B cell (primary cell): ENCODE measurements at regions of chr9 and their contacts with region 1.

Region 1: GRCh38 chr9:133532937-133533668 is 1.4 kb upstream of the ADAMTSL2 start:
- DNase-seq: peak; percentile 65
- ATAC-seq: peak; percentile 79
- H3K4me3 ChIP-seq: no peak overlapping the region
- H3K4me3 Mint-ChIP-seq: peak overlapping the region; percentile 29
- H3K27ac ChIP-seq: no peak overlapping the region
- H3K27ac Mint-ChIP-seq: peak overlapping the region; percentile 15
- H3K4me1 ChIP-seq: peaks cover 7 to 18% of the 10 kb centered on the region in 2 donors
- H3K4me1 Mint-ChIP-seq: peaks cover 13% of the 10 kb centered on the region
- H3K27me3 ChIP-seq: peaks cover 0 to 66% (median 10%) of the 10 kb centered on the region in 4 experiments
- H3K27me3 Mint-ChIP-seq: peaks cover 29% of the 10 kb centered on the region
- CTCF ChIP-seq: no peak

Region 2: GRCh38 chr9:133726401-133727276 is 193.5 kb after region 1 on chr9:
- CTCF ChIA-PET with region 1: no interaction called
- POLR2A ChIA-PET with region 1: no interaction called
- intact Hi-C with region 1: loop called (anchors 5 kb)
- DNase-seq: no peak
- ATAC-seq: no peak
- H3K4me3 ChIP-seq: no peak overlapping the region
- H3K4me3 Mint-ChIP-seq: no peak overlapping the region
- H3K27ac ChIP-seq: no peak overlapping the region
- H3K27ac Mint-ChIP-seq: peak overlapping the region; percentile 7
- H3K4me1 ChIP-seq: no peaks in the 10 kb centered on the region
- H3K4me1 Mint-ChIP-seq: peaks cover 7% of the 10 kb centered on the region
- H3K27me3 ChIP-seq: peaks cover 0 to 27% (median 8%) of the 10 kb centered on the region in 4 experiments
- H3K27me3 Mint-ChIP-seq: peaks cover 33% of the 10 kb centered on the region
- CTCF ChIP-seq: peak; percentile 39

Region 3: DNA sequence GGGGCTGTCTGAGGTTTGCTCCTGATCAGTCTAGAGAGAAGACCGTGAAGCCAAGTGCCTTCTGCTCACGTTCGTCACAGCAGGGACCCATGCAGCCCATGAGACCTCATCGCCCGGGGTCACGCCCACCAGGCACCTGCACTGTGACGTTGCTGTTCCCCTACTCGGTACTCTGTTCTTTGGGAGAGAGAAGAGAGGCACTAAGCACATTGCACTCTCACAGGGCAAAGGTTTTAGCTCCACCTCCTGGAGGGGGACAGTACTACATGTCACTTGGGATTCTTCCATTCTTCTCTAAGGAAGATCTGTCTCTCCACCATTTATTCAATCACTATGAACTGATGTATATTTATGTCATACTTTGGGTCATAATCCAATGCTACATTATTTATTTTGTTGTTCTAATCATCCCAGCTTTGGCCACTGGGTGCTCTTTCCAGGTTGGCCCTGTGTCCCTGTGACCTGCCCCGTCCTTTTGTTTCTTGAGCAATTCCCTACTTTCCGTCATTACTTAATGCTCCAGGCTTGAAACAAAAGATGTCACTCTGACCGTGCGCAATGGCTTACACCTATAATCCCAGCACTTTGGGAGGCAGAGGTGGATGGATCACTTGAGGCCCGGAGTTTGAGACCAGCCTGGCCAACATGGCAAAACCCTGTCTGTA is 566.2 kb after region 1 on chr9:
- CTCF ChIA-PET with region 1: no interaction called
- POLR2A ChIA-PET with region 1: no interaction called
- intact Hi-C with region 1: loop called (anchors 5 kb)
- DNase-seq: peak; percentile 80
- ATAC-seq: peak; percentile 92
- H3K4me3 ChIP-seq: no peak overlapping the region
- H3K4me3 Mint-ChIP-seq: no peak overlapping the region
- H3K27ac ChIP-seq: no peak overlapping the region
- H3K27ac Mint-ChIP-seq: no peak overlapping the region
- H3K4me1 ChIP-seq: no peaks in the 10 kb centered on the region
- H3K4me1 Mint-ChIP-seq: peaks cover 4% of the 10 kb centered on the region
- H3K27me3 ChIP-seq: peaks cover 0 to 3% (median 2%) of the 10 kb centered on the region in 4 experiments
- H3K27me3 Mint-ChIP-seq: peaks cover 21% of the 10 kb centered on the region
- CTCF ChIP-seq: peak; percentile 88